SK-N-SH (cell line): ENCODE measurements at regions of chr4 and their contacts with region 1.

Region 1: DNA sequence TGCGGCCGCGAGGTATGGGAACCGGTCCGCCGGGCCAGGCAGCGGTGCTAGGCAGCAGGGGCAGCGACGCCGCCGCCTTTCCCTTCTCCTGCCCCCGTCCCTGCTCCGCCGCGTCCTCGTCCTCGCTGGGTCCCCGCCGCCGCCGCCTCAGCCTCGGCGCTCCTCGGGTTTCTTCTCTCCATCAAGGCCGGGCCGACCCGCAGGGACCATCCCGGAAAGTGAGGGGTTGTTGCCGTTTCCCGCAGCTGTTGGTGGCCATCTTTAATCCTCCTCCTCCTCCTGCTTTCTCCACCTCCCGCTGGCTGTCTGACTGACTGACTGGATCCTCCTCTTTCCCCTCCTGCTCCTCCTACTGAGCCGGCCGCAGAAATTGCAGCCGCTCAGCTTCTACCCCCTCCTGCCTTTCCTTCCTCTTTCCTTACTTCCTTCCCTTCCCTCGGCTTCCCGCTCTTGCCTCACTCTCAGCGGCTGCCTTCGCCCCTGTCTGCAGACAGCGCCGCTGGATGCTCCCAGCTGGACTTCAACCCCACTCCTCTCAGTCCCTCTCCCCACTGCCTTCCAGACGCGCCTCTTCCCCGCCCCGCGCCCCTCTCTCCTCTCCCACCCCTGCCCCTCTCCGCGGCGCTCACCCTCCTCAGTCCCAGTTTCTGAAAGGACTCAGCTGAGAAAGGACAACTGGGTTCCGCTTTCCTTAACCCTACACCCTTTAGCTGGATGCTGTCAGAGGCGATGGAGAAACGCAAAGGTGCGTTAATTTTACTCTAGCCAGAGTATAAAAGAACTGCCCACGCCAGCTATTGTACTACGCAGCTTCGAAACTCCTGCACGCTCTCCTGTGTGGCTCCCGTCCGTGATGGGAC is at the start of gene WDFY3:
- DNase-seq: peak; percentile 88
- H3K4me3 ChIP-seq: peak within 1 kb of the TSS; percentile 78 to 90
- H3K27ac ChIP-seq: peak within 1 kb of the TSS; percentile 80 to 95
- H3K4me1 ChIP-seq: peaks cover 6 to 8% of the 10 kb centered on the region in 2 experiments; a peak in 3 of 4 replicates
- H3K27me3 ChIP-seq: no peaks in the 10 kb centered on the region
- CTCF ChIP-seq: no peak
- EP300 ChIP-seq: no peak
- RAD21 ChIP-seq: peak; percentile 27; the same call in 1 of the 2 replicates
- polyA plus RNA-seq, gene WDFY3: 13.8 and 17.4 TPM in 2 replicates

Region 2: GRCh38 chr4:84719115-84719514 is 247.5 kb before region 1 on chr4:
- CTCF ChIA-PET with region 1: interaction called, 10 read pairs
- POLR2A ChIA-PET with region 1: no interaction called
- DNase-seq: no peak
- H3K4me3 ChIP-seq: no peak overlapping the region
- H3K27ac ChIP-seq: no peak overlapping the region; a peak in 2 of 4 replicates
- H3K4me1 ChIP-seq: no peaks in the 10 kb centered on the region
- H3K27me3 ChIP-seq: no peaks in the 10 kb centered on the region
- CTCF ChIP-seq: no peak
- EP300 ChIP-seq: no peak
- RAD21 ChIP-seq: no peak

Region 3: DNA sequence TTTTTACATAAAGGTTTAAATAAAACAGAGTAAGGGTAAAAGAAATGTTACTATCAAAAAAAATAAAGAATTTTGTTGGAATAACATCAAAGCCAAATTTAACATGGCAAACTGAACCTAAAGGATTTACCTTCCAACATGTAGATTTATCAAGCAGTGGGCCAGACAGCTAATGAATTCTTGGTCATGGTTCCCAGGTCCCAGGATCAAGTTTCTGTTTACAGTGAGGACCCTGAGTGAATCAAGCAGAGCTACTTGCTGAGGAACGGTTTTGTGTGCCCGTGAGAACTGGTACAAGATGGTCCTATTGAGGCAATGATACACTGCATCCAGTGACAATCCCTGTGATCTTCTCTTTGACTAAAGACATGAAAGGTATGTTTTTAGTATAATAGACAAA is 226.6 kb before region 1 on chr4:
- CTCF ChIA-PET with region 1: interaction called, 17 read pairs
- POLR2A ChIA-PET with region 1: interaction called, 3 read pairs
- DNase-seq: no peak
- H3K4me3 ChIP-seq: no peak overlapping the region
- H3K27ac ChIP-seq: no peak overlapping the region
- H3K4me1 ChIP-seq: no peaks in the 10 kb centered on the region; a peak in 1 of 4 replicates
- H3K27me3 ChIP-seq: no peaks in the 10 kb centered on the region
- CTCF ChIP-seq: no peak
- EP300 ChIP-seq: no peak
- RAD21 ChIP-seq: no peak